ENCODE measurements at regions of chr15 and their contacts with region 1.

Region 1: DNA sequence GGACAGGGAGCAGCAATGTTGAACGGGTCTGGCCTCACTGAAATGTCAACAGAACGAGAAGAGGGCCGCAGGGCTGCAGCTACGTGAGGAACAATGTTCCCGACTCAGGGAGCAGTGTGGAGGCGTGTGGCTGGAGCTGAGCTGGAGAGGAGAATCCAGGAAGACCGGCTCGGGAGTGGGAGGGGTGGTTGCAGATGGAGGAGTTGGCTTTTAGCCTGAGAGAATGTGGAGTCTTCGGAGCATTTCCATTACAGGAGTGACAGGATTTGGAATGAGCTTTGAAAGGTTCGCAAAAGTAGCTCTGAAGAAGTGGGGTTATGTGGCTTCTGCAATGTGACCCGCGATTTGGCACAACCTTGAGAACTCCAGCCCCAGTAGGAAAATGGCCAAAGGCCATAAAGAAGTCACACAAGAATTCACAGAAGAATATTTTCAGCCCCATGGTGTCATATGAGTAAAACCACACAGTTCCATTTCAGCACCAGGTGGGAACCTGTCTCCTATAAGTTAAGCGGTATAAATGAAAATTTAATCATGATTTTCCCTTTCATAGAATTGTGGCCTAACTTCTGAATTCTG is 78.8 kb upstream of the NSMCE3 start:
- DNase-seq: no peak
- H3K4me3 ChIP-seq: no peak overlapping the region
- H3K27ac ChIP-seq: no peak overlapping the region
- H3K4me1 ChIP-seq: no peaks in the 10 kb centered on the region
- H3K27me3 ChIP-seq: no peaks in the 10 kb centered on the region
- CTCF ChIP-seq: no peak
- EP300 ChIP-seq: no peak
- POLR2A ChIP-seq: no peak

Region 2: GRCh38 chr15:29424118-29424517 is 75.7 kb after region 1 on chr15:
- intact Hi-C with region 1: loop called in 1 of 4 experiments (anchors 10 kb)
- DNase-seq: no peak
- H3K4me3 ChIP-seq: no peak overlapping the region
- H3K27ac ChIP-seq: no peak overlapping the region
- H3K4me1 ChIP-seq: no peaks in the 10 kb centered on the region
- H3K27me3 ChIP-seq: no peaks in the 10 kb centered on the region
- CTCF ChIP-seq: no peak
- EP300 ChIP-seq: no peak
- POLR2A ChIP-seq: no peak

Region 3: DNA sequence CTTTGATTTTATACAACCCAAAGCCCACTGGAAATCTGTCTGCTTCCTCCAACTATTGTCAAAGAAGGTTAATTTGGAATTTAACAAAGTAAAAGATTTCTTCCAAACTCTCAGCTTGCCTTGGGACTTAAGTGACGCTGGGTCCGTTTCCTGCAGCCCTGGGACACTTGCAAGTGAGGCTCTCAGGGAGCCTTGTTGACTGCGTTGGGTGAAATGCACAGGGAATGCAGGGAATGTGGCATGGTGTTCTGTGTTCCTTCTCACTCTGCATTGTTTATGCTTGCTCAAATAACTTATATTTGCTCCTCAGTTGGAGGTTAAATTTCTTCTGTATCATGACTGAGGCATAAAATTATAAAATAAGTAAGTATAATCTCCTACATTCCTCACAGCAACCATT is 534.7 kb after region 1 on chr15:
- intact Hi-C with region 1: no loop called
- DNase-seq: no peak
- H3K4me3 ChIP-seq: no peak overlapping the region
- H3K27ac ChIP-seq: no peak overlapping the region
- H3K4me1 ChIP-seq: no peaks in the 10 kb centered on the region
- H3K27me3 ChIP-seq: no peaks in the 10 kb centered on the region
- CTCF ChIP-seq: no peak
- EP300 ChIP-seq: no peak
- POLR2A ChIP-seq: no peak

Measured in ovary (tissue), 10 donors.